Naive thymus-derived CD4-positive, alpha-beta T cell (primary cell): ENCODE measurements at regions of chr6 and their contacts with region 1.

Region 1: DNA sequence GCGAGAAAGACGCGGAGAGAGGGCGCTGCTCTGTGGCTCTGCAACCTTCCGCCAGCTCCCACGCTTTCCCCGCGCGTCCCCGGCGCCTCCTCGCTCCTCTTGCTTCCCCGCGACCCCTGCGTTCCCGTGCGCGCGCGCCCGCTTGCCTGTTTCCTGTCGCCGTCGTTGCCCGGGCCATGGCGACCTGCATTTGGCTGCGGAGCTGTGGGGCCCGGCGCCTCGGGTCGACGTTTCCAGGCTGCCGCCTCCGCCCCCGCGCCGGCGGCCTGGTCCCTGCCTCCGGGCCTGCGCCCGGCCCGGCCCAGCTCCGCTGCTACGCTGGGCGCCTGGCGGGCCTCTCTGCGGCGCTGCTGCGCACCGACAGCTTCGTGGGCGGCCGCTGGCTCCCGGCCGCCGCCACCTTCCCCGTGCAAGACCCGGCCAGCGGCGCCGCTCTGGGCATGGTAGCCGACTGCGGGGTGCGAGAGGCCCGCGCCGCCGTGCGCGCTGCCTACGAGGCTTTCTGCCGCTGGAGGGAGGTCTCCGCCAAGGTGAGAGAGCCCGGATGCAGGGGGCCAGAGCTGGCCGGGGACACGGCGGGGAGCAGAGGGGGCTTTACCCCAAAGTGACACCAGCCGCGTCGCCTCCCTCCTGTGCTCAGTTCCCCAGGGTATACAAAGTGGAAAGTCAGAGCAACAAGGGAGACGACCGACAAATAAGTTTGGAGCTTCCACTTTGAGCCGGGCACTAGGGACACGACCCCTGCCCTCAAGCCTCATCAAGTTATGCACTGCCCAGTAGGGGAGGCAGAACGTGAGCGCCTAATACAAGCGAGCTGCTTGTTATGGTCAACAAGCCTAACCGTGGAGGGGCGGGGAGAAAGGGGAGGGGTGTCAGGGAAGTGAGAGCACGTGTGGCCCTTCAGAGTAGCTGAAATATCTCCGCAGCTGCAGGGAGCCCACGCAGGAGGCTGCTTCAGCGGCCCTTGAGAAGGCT is at the start of gene ALDH5A1:
- DNase-seq: peak; percentile 63 to 86 (median 84)
- ATAC-seq: peak; percentile 89
- H3K4me3 ChIP-seq: peak within 1 kb of the TSS; percentile 74
- H3K4me3 Mint-ChIP-seq: peak within 1 kb of the TSS; percentile 84 to 91 (median 88)
- H3K27ac ChIP-seq: peak within 1 kb of the TSS; percentile 63
- H3K27ac Mint-ChIP-seq: peak within 1 kb of the TSS; percentile 30 to 88 (median 74)
- H3K4me1 ChIP-seq: peaks cover 12 to 15% of the 10 kb centered on the region in 2 donors
- H3K4me1 Mint-ChIP-seq: peaks cover 13 to 50% (median 31%) of the 10 kb centered on the region in 7 donors
- H3K27me3 ChIP-seq: no peaks in the 10 kb centered on the region
- H3K27me3 Mint-ChIP-seq: peaks cover 0 to 2% (median 0%) of the 10 kb centered on the region in 5 donors
- total RNA-seq, gene ALDH5A1: 5.7 to 20.6 (median 8.9) TPM

Region 2: GRCh38 chr6:24274441-24275083 is 220.5 kb before region 1 on chr6:
- CTCF ChIA-PET with region 1: no interaction called
- POLR2A ChIA-PET with region 1: no interaction called
- intact Hi-C with region 1: no loop called
- DNase-seq: no peak
- ATAC-seq: no peak
- H3K4me3 ChIP-seq: no peak overlapping the region
- H3K4me3 Mint-ChIP-seq: no peak overlapping the region
- H3K27ac ChIP-seq: no peak overlapping the region
- H3K27ac Mint-ChIP-seq: no peak overlapping the region
- H3K4me1 ChIP-seq: no peaks in the 10 kb centered on the region
- H3K4me1 Mint-ChIP-seq: no peaks in the 10 kb centered on the region
- H3K27me3 ChIP-seq: no peaks in the 10 kb centered on the region
- H3K27me3 Mint-ChIP-seq: peaks cover 0 to 19% (median 15%) of the 10 kb centered on the region in 5 donors

Region 3: DNA sequence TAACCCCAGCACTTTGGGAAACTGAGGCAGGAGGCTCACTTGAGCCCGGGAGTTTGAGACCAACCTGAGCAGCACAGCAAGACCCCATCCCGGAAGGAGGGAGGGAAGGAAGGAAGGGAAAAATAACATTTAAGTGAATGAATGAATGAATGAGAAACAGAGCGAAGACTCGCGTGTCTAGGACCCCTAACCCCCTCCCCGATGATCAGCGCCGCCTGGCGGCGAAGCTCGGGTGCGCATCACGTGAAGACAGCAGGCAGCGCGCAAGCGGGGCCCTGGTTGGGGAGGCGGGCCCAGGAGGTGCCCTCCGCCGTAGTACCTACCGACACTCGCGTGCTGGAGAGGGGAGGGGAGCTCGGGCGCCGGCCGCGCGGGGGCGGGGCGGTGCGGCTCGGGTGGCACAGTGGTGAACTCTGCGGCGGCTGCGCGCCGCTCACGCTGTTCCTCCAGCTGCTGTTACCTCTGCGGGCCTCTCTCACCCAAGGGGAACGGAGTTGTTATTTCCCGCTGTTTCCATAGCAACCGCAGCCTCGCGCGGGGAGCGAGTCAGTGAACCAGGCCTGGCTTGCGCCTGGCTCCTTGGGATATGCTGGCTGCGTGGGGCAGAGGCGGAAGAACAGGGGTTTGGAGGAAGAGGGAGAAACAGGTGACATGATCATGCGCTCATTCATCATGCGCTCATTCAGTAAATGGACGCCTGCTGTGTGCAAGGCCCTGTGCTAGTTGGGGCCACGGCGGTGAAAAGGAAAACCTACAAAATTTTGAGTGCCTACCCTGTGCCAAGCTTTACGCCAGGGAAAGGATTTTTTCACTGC is 135.3 kb before region 1 on chr6:
- CTCF ChIA-PET with region 1: no interaction called
- POLR2A ChIA-PET with region 1: no interaction called
- intact Hi-C with region 1: loop called in 1 of 2 experiments (anchors 1 kb)
- DNase-seq: peak; percentile 67 to 86 (median 81)
- ATAC-seq: peak; percentile 97
- H3K4me3 ChIP-seq: peak overlapping the region; percentile 50
- H3K4me3 Mint-ChIP-seq: peak overlapping the region; percentile 79 to 89 (median 87)
- H3K27ac ChIP-seq: peak overlapping the region; percentile 9
- H3K27ac Mint-ChIP-seq: peak overlapping the region in 8 of 9 donors; percentile 66 to 96 (median 82)
- H3K4me1 ChIP-seq: peaks cover 7 to 11% of the 10 kb centered on the region in 2 donors
- H3K4me1 Mint-ChIP-seq: peaks cover 10 to 39% (median 28%) of the 10 kb centered on the region in 7 donors
- H3K27me3 ChIP-seq: no peaks in the 10 kb centered on the region
- H3K27me3 Mint-ChIP-seq: peaks cover 0 to 57% (median 5%) of the 10 kb centered on the region in 5 donors

Region 4: GRCh38 chr6:24520929-24521546 is 25.9 kb after region 1 on chr6:
- CTCF ChIA-PET with region 1: interaction called, 14 read pairs
- POLR2A ChIA-PET with region 1: interaction called, 5 read pairs
- intact Hi-C with region 1: loop called in 1 of 2 experiments (anchors 1 kb)
- DNase-seq: peak in 3 of 9 donors; percentile 10 to 26 (median 11)
- ATAC-seq: peak; percentile 75
- H3K4me3 ChIP-seq: no peak overlapping the region
- H3K4me3 Mint-ChIP-seq: no peak overlapping the region
- H3K27ac ChIP-seq: no peak overlapping the region
- H3K27ac Mint-ChIP-seq: peak overlapping the region in 1 of 9 donors; percentile 5
- H3K4me1 ChIP-seq: no peaks in the 10 kb centered on the region
- H3K4me1 Mint-ChIP-seq: peaks cover 0 to 20% (median 4%) of the 10 kb centered on the region in 7 donors
- H3K27me3 ChIP-seq: no peaks in the 10 kb centered on the region
- H3K27me3 Mint-ChIP-seq: no peaks in the 10 kb centered on the region

Region 5: DNA sequence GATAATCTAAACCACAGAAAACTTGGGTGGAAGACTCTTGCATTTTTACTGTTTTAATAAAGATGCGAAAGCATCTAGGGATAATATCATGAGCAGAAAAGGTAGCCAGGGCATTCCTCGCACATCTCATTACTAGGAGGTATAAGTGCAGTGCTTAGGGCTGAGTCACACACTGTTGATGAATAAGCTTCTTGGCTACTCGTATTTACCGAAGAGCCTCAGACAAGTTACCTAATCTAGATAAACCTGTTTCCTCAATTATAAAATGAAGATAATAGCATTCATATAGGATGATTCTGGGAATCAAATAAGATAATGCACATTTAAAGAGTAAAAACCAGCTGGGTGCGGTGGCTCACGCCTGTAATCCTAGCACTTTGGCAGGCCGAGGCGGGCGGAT is 151.7 kb after region 1 on chr6:
- CTCF ChIA-PET with region 1: no interaction called
- POLR2A ChIA-PET with region 1: interaction called, 4 read pairs
- intact Hi-C with region 1: loop called in 1 of 2 experiments (anchors 5 kb)
- DNase-seq: no peak
- ATAC-seq: no peak
- H3K4me3 ChIP-seq: no peak overlapping the region
- H3K4me3 Mint-ChIP-seq: peak overlapping the region; percentile 82 to 98 (median 88)
- H3K27ac ChIP-seq: peak overlapping the region; percentile 16
- H3K27ac Mint-ChIP-seq: peak overlapping the region in 6 of 9 donors; percentile 31 to 94 (median 70)
- H3K4me1 ChIP-seq: peaks cover 0 to 12% of the 10 kb centered on the region in 2 donors
- H3K4me1 Mint-ChIP-seq: peaks cover 6 to 23% (median 12%) of the 10 kb centered on the region in 7 donors
- H3K27me3 ChIP-seq: peaks cover 0 to 5% of the 10 kb centered on the region in 2 donors
- H3K27me3 Mint-ChIP-seq: peaks cover 1 to 27% (median 21%) of the 10 kb centered on the region in 5 donors

Region 6: GRCh38 chr6:24666641-24667377 is 171.7 kb after region 1 on chr6 and contains the starts of genes ACOT13 and TDP2:
- CTCF ChIA-PET with region 1: no interaction called
- POLR2A ChIA-PET with region 1: interaction called, 4 read pairs
- intact Hi-C with region 1: loop called in 1 of 2 experiments (anchors 1 kb)
- DNase-seq: peak; percentile 93 to 97 (median 96)
- ATAC-seq: peak; percentile 97
- H3K4me3 ChIP-seq: peak within 1 kb of the TSS; percentile 91
- H3K4me3 Mint-ChIP-seq: peak within 1 kb of the TSS; percentile 93 to 100 (median 98)
- H3K27ac ChIP-seq: peak within 1 kb of the TSS; percentile 88
- H3K27ac Mint-ChIP-seq: peak within 1 kb of the TSS; percentile 91 to 99 (median 98)
- H3K4me1 ChIP-seq: peaks cover 19 to 27% of the 10 kb centered on the region in 2 donors
- H3K4me1 Mint-ChIP-seq: peaks cover 28 to 70% (median 68%) of the 10 kb centered on the region in 7 donors
- H3K27me3 ChIP-seq: no peaks in the 10 kb centered on the region
- H3K27me3 Mint-ChIP-seq: no peaks in the 10 kb centered on the region
- total RNA-seq, gene ACOT13: 4.0 to 20.0 (median 12.5) TPM
- total RNA-seq, gene TDP2: 38.6 to 69.7 (median 48.2) TPM

Region 7: GRCh38 chr6:25078141-25078540 is 583.0 kb after region 1 on chr6:
- CTCF ChIA-PET with region 1: no interaction called
- POLR2A ChIA-PET with region 1: no interaction called
- intact Hi-C with region 1: no loop called
- DNase-seq: no peak
- ATAC-seq: no peak
- H3K4me3 ChIP-seq: no peak overlapping the region
- H3K4me3 Mint-ChIP-seq: no peak overlapping the region
- H3K27ac ChIP-seq: no peak overlapping the region
- H3K27ac Mint-ChIP-seq: no peak overlapping the region
- H3K4me1 ChIP-seq: no peaks in the 10 kb centered on the region
- H3K4me1 Mint-ChIP-seq: peaks cover 0 to 11% (median 9%) of the 10 kb centered on the region in 7 donors
- H3K27me3 ChIP-seq: no peaks in the 10 kb centered on the region
- H3K27me3 Mint-ChIP-seq: no peaks in the 10 kb centered on the region